A549 (cell line): ENCODE measurements at regions of chr16 and their contacts with region 1.

Region 1: GRCh38 chr16:80526425-80527061 is 14.2 kb upstream of the DYNLRB2 start:
- DNase-seq: peak in 1 of 2 experiments; percentile 62
- ATAC-seq: peak in 1 of 2 experiments; percentile 79; a peak in 3 of 6 replicates
- H3K4me3 ChIP-seq: no peak overlapping the region
- H3K27ac ChIP-seq: no peak overlapping the region
- H3K4me1 ChIP-seq: no peaks in the 10 kb centered on the region
- CTCF ChIP-seq: peak; percentile 92
- EP300 ChIP-seq: no peak
- POLR2A ChIP-seq: no peak
- RAD21 ChIP-seq: peak; percentile 89 to 90

Region 2: GRCh38 chr16:80390871-80391489 is 135.6 kb before region 1 on chr16:
- CTCF ChIA-PET with region 1: no interaction called
- POLR2A ChIA-PET with region 1: no interaction called
- DNase-seq: no peak
- ATAC-seq: no peak
- H3K4me3 ChIP-seq: no peak overlapping the region
- H3K27ac ChIP-seq: no peak overlapping the region
- H3K4me1 ChIP-seq: no peaks in the 10 kb centered on the region
- CTCF ChIP-seq: no peak
- EP300 ChIP-seq: no peak
- POLR2A ChIP-seq: no peak
- RAD21 ChIP-seq: no peak

Region 3: GRCh38 chr16:80447241-80447640 is 79.3 kb before region 1 on chr16:
- CTCF ChIA-PET with region 1: no interaction called
- POLR2A ChIA-PET with region 1: no interaction called
- DNase-seq: no peak
- ATAC-seq: no peak
- H3K4me3 ChIP-seq: no peak overlapping the region
- H3K27ac ChIP-seq: no peak overlapping the region
- H3K4me1 ChIP-seq: no peaks in the 10 kb centered on the region
- CTCF ChIP-seq: no peak
- EP300 ChIP-seq: no peak
- POLR2A ChIP-seq: no peak
- RAD21 ChIP-seq: no peak

Region 4: GRCh38 chr16:80540516-80541272 is 14.2 kb after region 1 on chr16 and contains the start of gene DYNLRB2:
- CTCF ChIA-PET with region 1: interaction called, 19 read pairs
- POLR2A ChIA-PET with region 1: no interaction called
- DNase-seq: peak; percentile 86 to 95
- ATAC-seq: peak; percentile 97 to 98
- H3K4me3 ChIP-seq: peak within 1 kb of the TSS; percentile 57
- H3K27ac ChIP-seq: peak within 1 kb of the TSS; percentile 74 to 89
- H3K4me1 ChIP-seq: 0 out of 3 replicates have a peak, but pooled peaks cover 2% of the 10 kb centered on the region
- CTCF ChIP-seq: no peak
- EP300 ChIP-seq: no peak
- POLR2A ChIP-seq: peak; percentile 62
- RAD21 ChIP-seq: no peak
- polyA plus RNA-seq, gene DYNLRB2: 0.25 TPM in 1 of 2 replicates, not detected in the other